Activated T-helper 1 cell treated with anti-CD3 and anti-CD28 coated beads, Interleukin-12 subunit alpha, Interleukin-12 subunit beta, Interleukin-2, Interleukin-4 antibody, amounts not matched to agents 30 ng/mL and 10 ng/mL and 1 ng/mL, durations not matched to agents 14 hours and 24 hours and 36 hours (primary cell): ENCODE measurements at regions of chr1 and their contacts with region 1.

Region 1: GRCh38 chr1:167936068-167936929 is at the start of gene DCAF6:
- DNase-seq: peak; percentile 98
- H3K4me3 Mint-ChIP-seq: peak within 1 kb of the TSS; percentile 91
- H3K27ac Mint-ChIP-seq: peak within 1 kb of the TSS; percentile 98
- H3K4me1 Mint-ChIP-seq: peaks cover 41% of the 10 kb centered on the region
- H3K27me3 Mint-ChIP-seq: no peaks in the 10 kb centered on the region
- total RNA-seq, gene DCAF6: 20.9 and 24.0 TPM in 2 replicates

Region 2: DNA sequence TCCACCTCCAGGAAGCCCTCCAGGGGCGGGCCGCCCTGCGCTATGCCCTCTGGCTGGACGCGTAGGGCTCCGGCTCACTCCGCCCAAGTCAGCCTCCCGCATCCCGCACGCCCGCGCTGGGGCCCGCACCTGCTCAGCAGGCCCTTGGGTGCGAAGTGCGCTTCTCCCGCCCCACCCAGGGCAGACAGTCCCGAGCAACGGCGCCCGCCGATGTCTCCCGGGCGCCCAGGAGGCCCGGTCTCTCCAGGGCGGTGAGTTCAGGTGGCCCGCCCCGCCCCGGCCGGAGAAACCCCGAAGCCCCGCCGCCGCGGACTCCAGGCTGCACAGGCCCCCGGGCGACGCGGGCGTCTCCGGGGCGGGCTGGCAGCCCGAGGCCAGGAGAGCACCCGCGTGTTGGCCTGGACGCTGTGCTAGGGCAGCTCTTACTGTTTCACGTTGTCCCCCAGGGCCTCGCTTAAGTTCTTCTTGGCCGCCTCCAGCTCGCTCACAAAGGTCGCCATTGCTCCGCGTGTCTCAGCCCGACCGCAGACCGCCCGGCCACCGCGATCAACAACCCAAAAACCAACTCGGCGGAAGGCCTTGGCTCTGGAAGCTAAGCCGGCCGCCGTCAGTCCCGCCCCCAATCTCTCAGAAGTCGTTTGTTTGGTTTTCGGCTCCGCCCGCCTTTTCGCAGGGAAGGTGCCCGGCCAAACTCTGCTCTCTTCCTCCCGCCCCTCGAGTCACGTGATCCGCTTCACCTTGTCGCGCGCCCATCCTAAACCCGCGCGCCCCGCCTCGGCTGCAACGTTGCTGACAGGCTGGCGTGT is 1060.4 kb before region 1 on chr1 and contains the start of gene TADA1:
- intact Hi-C with region 1: loop called (anchors 5 kb)
- DNase-seq: peak; percentile 97
- H3K4me3 Mint-ChIP-seq: peak within 1 kb of the TSS; percentile 92
- H3K27ac Mint-ChIP-seq: peak within 1 kb of the TSS; percentile 98
- H3K4me1 Mint-ChIP-seq: peaks cover 50% of the 10 kb centered on the region
- H3K27me3 Mint-ChIP-seq: peaks cover 3% of the 10 kb centered on the region
- total RNA-seq, gene TADA1: 15.6 and 17.3 TPM in 2 replicates

Region 3: GRCh38 chr1:167599957-167600581 is 336.2 kb before region 1 on chr1:
- intact Hi-C with region 1: loop called (anchors 1 kb)
- DNase-seq: peak; percentile 38
- H3K4me3 Mint-ChIP-seq: peak overlapping the region; percentile 73
- H3K27ac Mint-ChIP-seq: peak overlapping the region; percentile 81
- H3K4me1 Mint-ChIP-seq: peaks cover 46% of the 10 kb centered on the region
- H3K27me3 Mint-ChIP-seq: peaks cover 2% of the 10 kb centered on the region

Region 4: DNA sequence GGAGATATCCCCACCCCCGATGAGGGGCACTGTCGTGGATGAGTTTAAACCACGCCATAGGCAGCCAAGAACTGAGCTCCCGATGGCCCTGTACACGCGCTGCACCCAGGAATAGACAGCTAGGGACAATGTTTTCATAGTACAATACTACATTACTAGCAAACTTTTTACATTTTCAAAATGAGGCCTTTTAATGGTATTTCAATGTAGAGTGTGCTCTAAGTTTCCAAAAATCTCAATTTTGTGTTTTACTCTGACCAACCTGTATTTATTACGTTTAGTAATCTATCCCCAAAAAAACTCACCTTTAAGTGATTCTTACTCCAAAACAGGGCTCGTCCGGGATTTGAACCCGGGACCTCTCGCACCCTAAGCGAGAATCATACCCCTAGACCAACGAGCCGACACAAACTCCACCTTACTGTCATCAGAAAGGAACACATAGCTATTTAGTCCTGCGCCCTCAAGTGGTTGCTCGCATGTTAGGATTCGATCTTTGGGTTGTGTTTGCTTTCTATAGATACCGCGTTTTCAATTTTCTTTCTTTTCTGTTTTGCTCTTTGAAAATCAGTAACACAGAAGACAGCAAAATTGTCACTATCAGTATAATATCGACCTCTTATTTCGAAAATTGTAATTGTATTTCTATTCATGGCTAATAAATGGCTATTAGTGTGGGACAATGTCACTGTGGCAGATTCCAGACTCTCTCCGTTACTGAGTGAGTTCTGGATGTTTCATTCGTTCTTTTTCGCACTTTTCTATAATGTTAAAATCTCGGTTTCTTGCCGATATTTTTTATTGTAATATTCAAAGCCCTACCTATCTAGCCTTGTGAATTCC is 220.9 kb before region 1 on chr1:
- intact Hi-C with region 1: loop called (anchors 1 kb)
- DNase-seq: peak; percentile 84
- H3K4me3 Mint-ChIP-seq: peak overlapping the region; percentile 96
- H3K27ac Mint-ChIP-seq: peak overlapping the region; percentile 91
- H3K4me1 Mint-ChIP-seq: peaks cover 61% of the 10 kb centered on the region
- H3K27me3 Mint-ChIP-seq: peaks cover 21% of the 10 kb centered on the region

Region 5: DNA sequence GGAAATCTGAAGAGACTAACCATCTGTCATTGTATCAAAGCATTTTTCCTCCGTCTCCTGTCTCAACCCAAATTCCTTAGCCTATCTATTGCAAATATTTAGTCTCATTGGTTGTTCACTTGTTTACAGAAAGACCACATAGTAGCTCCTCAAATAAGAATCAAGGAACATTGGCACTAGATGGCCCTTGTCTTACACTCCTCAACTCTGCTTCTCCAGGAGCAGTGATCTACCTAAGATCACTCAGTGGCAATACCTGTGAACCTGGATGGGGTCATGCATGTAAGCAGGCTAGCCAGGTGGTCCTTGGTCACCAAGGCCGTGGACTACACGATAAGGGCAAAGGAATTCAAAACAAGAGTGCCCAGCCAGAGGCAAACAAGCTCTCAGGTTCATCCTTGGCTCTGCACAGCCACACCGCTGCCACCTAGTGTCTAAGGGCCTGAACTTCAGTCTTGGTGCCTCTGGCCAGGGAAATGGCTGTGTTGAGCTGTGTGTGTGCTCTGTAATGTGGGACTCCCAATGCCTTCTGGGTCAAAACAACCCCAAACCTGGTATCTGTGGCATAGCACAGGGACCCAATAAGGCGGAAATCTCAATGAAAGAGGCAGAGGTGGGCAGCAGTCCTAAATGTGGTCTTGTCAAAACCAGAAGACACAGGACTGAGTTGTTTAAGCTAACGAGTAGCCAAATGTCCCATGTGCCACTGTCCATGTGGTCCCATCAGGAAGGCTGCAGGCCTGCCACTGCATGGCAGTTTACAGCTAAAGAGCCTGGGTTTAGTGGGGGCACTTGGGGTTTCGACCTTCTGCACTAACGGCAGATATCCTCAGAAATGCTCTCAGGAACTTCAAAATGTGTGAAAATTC is 145.9 kb after region 1 on chr1:
- intact Hi-C with region 1: loop called (anchors 1 kb)
- DNase-seq: peak; percentile 53
- H3K4me3 Mint-ChIP-seq: no peak overlapping the region
- H3K27ac Mint-ChIP-seq: no peak overlapping the region
- H3K4me1 Mint-ChIP-seq: peaks cover 13% of the 10 kb centered on the region
- H3K27me3 Mint-ChIP-seq: peaks cover 3% of the 10 kb centered on the region

Region 6: GRCh38 chr1:168178638-168179437 is 242.5 kb after region 1 on chr1 and contains the start of gene TIPRL:
- intact Hi-C with region 1: loop called (anchors 1 kb)
- DNase-seq: peak; percentile 95
- H3K4me3 Mint-ChIP-seq: no peak within 1 kb of the TSS
- H3K27ac Mint-ChIP-seq: no peak within 1 kb of the TSS
- H3K4me1 Mint-ChIP-seq: no peaks in the 10 kb centered on the region
- H3K27me3 Mint-ChIP-seq: no peaks in the 10 kb centered on the region
- total RNA-seq, gene TIPRL: 42.8 and 45.7 TPM in 2 replicates

Region 7: DNA sequence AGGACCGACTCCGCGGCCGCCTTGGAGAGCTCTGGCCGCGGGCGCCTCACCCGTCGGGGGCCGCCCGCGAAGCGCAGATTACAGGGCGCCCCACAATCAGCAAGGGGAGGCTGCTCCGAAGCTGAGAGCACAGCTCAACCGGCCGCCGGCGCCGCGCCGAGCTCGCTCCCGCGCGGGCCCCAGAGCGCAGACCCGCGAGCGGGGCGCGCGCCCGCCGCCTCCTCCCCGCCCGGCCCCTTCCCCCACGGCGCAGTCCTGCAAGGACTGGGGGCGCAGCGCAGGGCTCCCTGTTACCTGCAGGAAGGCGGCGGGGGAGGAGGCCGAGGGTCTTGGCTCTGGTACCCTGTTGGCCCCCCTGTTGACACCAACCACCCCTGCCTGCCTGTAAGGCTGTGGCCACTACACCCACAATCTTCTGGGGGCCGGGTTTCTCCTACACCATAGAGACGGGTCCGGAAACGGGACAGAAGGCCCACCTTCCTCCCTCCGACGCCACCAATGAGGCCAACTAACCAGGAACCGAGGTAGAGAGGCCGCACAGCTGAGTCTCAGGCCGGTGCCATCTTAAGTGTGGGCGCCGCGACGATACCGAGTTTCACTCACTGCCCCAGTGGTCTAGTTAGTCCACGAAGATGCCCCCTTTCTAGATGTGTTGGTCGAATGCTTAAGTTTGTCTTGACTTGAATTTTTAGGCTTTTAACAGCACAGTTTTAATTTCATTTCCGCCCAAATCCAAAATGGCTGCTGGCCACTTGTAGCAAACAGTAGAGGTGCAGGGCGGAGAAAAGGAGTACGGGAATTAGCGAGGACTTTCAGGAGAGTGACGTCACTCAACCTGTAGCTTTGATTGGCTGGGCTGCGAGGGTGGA is 1957.4 kb after region 1 on chr1 and contains the start of gene SCYL3:
- intact Hi-C with region 1: loop called (anchors 1 kb)
- DNase-seq: peak; percentile 86
- H3K4me3 Mint-ChIP-seq: peak within 1 kb of the TSS; percentile 86
- H3K27ac Mint-ChIP-seq: peak within 1 kb of the TSS; percentile 100
- H3K4me1 Mint-ChIP-seq: peaks cover 51% of the 10 kb centered on the region
- H3K27me3 Mint-ChIP-seq: peaks cover 12% of the 10 kb centered on the region
- total RNA-seq, gene SCYL3: 11.8 and 12.3 TPM in 2 replicates